Posterior vena cava (tissue), 2 donors: ENCODE measurements at regions of chr19 and their contacts with region 1.

Region 1: DNA sequence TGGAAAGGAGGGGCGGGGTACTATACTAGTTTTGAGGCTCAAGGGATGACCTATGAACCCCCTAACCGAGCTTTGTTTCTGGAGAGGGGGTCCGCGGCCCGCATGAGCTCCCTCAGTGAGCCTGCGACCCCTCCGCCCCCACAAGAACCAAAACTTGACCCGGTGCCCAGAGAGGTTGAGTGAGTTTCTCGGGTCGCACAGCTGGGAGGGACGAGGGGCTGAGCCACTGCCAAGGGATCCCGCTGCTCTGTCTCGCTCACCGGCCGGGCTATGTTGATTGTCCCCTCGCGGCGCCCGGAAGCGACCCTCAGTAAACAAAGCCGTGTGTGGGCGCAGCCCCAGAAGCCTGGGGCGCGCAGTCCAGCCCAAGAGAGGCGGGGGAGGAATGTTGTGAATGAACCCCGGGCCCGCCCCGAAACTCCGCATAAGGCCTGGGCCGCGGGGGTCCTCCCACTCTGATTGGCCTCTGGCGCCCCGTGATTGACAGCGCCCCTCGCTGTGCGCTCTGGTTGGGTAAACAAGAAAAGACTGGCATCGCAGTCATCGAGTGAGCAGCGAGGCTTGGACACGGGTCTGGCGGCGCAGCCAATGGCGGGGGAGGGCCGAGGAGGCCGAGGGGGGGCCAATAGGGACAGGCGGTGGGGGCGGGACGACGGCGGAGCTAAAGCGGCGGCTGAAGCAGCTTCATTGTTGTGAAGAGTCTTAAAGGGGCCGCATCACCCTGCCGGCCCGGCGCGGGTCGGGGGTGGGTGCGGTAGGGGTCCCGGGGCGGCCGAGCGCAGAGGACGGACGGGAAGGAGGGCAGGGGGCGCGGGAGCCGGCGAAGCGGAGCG is at the start of gene ZSWIM4:
- DNase-seq: peak; percentile 99
- total RNA-seq, gene ZSWIM4: 2.5 to 7.8 TPM

Region 2: DNA sequence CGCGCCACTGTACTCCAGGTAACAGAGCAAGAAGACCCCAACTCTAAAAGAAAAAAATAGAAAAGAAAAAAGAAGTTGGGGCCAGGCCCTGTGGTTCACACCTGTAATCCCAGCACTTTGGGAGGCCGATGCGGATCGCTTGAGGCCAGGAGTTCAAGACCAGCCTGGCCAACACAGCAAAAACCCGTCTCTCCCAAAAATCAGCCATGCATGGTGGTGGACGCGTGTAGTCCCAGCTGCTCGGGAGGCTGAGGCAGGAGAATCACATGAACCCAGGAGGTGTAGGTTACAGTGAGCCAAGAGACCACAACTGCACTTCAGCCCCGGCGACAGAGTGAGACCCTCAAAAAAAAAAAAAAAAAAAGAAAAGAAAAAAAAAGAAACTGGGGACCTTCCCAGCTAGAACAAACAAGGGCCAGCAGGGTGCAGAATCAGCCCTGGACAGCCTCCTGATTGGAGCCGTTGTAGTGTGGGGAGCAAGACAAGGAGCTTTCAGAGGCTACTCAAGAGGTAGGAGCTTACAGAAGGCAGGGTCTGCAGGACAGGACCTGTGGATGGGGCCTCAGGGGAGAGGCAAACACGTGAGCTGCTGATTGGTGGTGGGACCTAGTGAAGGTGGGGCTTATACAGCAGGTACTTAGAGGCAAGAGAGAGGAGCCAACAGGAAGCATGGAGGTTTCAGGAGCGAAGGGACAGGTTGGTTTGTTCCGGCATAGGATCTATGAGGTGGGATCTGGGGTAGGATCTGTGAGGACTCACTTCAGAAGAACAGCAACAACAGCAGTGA is 32.5 kb after region 1 on chr19:
- intact Hi-C with region 1: loop called (anchors 2 to 5 kb)
- DNase-seq: no peak

Region 3: GRCh38 chr19:13833330-13834243 is 38.6 kb after region 1 on chr19:
- intact Hi-C with region 1: loop called (anchors 2 to 5 kb)
- DNase-seq: peak; percentile 98

Region 4: DNA sequence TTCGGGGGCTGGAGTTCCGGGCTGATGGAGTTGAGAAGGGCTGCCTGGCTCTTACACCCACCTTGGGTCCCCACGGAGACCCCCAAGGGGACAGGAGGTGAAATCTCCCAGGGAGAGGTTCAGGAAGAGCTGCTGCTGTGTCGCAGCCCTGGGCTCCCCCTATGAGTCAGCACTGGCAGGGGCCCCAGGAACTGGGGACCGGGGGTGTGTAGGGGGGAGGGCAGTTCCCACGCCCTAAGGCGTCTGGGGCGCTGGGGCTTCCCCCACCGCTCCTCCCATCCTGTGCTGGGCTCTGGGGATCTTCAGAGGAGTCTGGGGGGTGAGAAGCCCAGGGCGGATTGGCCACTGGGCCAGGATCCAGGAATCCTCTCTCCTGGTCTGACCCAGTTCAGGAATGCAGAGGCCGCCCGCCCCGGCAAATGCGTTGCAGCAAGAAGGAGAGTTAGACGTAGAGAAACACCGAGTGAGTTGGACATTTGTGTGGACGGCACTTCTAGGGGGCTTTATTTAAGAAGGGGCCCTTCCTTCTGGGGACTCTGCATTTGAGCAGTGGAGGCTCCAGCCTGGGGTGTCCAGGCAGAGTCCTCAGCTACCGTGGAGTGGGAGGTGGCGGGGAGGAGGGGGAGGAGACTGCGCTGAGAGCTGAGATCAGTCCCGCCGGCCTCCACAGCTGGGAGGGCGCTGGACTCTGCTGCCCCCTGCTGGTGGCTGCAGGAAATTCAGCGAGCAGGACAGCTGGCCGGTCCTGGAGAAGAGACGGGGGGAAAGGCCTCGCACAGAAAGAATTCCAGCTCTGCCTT is 67.0 kb after region 1 on chr19:
- intact Hi-C with region 1: no loop called
- DNase-seq: peak; percentile 98